Activated T-helper 2 cell treated with anti-CD3 and anti-CD28 coated beads, Interferon-gamma antibody, Interleukin-2, Interleukin-4, amounts not matched to agents 10 μg/mL and 5 μg/mL and 100 μg/mL, durations not matched to agents 14 hours and 24 hours and 36 hours (primary cell): ENCODE measurements at regions of chr10 and their contacts with region 1.

Region 1: GRCh38 chr10:23516530-23516929 is 77.7 kb downstream of the OTUD1 start:
- DNase-seq: no peak
- H3K4me3 Mint-ChIP-seq: no peak overlapping the region
- H3K27ac Mint-ChIP-seq: no peak overlapping the region
- H3K4me1 Mint-ChIP-seq: peaks cover 20% of the 10 kb centered on the region
- H3K27me3 Mint-ChIP-seq: peaks cover 25% of the 10 kb centered on the region

Region 2: DNA sequence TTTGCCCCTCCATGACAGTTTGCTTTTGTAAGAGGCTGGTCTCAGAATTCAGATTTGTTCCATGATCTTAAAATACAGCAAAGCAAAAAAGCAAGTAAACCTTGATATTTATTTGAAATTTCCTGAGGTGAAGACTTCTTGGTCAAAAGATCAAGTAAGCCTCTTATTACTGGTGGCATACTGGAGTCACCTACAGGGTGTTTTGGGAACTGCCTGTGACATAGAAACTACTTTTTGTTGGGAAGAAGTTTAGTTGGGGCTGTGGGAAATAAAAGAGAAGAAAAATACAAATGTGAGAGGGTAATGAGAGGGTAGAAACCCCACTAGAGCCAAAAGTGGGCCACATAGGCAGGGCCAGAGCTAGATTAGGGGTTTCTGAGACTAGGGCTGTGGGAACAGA is 140.2 kb after region 1 on chr10:
- intact Hi-C with region 1: loop called (anchors 1 kb)
- DNase-seq: no peak
- H3K4me3 Mint-ChIP-seq: no peak overlapping the region
- H3K27ac Mint-ChIP-seq: no peak overlapping the region
- H3K4me1 Mint-ChIP-seq: no peaks in the 10 kb centered on the region
- H3K27me3 Mint-ChIP-seq: no peaks in the 10 kb centered on the region

Region 3: DNA sequence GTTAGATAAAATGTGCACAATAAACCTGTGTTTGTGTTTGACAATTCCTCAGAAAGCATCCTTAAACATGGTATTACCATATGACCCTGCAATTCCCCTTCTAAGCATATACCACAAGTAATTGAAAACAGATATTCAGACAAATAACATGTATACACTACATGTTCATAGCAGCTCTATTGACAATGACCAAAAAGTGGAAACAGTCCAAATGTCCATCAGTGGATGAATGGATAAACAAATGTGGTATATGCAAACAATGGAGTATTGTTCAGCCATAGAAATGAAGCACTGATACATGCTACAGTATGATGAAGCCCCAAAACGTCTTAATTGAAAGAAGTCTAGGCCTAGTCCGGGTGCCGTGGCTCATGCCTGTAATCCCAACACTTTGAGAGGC is 202.4 kb after region 1 on chr10:
- intact Hi-C with region 1: no loop called
- DNase-seq: no peak
- H3K4me3 Mint-ChIP-seq: no peak overlapping the region
- H3K27ac Mint-ChIP-seq: no peak overlapping the region
- H3K4me1 Mint-ChIP-seq: no peaks in the 10 kb centered on the region
- H3K27me3 Mint-ChIP-seq: no peaks in the 10 kb centered on the region

Region 4: DNA sequence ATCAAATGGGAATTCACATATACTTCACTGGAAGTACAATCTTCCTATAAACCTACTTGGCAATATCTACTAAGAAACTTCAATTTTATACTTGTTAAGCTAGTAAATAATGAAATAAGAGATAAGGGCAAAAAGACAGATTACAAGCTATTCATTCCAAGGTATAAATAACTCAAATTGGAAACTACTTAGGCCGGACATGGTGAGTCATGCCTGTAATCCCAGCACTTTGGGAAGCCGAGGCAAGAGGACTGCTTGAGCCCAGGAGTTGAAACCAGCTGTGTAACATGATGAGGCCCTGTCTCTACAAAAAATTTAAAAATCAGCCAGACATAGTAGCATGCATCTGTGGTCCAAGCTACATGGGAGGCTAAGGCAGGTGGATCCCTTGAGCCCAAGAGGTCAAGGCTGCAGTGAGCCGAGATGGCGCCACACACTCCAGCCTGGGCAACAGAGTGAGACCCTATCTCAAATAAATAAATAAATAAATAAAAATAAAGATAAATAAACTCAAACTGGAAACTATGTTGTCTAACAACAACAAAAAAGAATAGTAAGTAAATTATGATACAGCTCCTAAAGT is 1169.5 kb after region 1 on chr10:
- intact Hi-C with region 1: no loop called
- DNase-seq: no peak
- H3K4me3 Mint-ChIP-seq: no peak overlapping the region
- H3K27ac Mint-ChIP-seq: no peak overlapping the region
- H3K4me1 Mint-ChIP-seq: peaks cover 5% of the 10 kb centered on the region
- H3K27me3 Mint-ChIP-seq: no peaks in the 10 kb centered on the region